ENCODE measurements at regions of chr21 and their contacts with region 1.

Region 1: GRCh38 chr21:34202553-34203372 is 129.4 kb downstream of the MRPS6 start:
- DNase-seq: peak; percentile 23
- H3K4me3 ChIP-seq: peak overlapping the region in 1 of 4 donors; percentile 53
- H3K27ac ChIP-seq: peak overlapping the region; percentile 64 to 79 (median 66)
- H3K4me1 ChIP-seq: peaks cover 6 to 52% (median 15%) of the 10 kb centered on the region in 4 donors
- H3K27me3 ChIP-seq: no peaks in the 10 kb centered on the region
- CTCF ChIP-seq: no peak
- EP300 ChIP-seq: no peak
- POLR2A ChIP-seq: no peak

Region 2: DNA sequence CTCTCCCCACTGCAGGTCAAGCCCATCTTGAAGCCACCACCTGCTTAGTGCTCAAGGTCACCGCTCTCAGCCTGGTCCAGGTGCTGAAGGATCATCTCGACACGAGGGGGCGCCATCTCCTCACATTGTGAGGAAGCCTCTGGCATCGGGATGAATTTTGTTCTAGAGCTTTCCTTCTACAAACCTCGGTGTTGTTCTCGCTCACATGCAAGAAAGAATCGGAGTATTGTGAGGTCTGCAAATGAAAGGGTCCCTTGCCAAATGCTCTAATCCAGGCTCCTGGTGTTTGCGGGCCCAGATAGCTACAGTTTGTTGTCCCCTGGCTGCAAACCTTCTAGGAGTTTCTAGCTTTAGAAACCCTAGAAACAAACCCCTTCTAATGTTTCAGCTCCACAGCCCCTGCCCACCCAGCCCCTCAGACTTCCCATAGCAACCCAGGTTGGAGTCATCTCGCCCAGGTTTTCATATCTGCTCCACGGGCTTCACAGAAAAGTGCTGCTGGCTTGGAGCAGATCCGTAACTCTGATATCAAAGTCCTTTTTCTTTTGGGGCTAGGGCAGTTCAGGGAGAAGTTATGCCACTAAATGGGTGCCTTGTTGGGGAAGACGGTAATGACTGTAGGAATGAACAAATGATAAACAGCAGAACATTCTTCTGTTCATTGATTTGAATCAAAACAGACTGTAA is 278.5 kb before region 1 on chr21:
- in situ Hi-C with region 1: loop called in 2 of 4 experiments (anchors 10 to 25 kb)
- intact Hi-C with region 1: no loop called
- DNase-seq: peak; percentile 94
- H3K4me3 ChIP-seq: peak overlapping the region in 1 of 4 donors; percentile 20
- H3K27ac ChIP-seq: peak overlapping the region; percentile 28 to 54 (median 38)
- H3K4me1 ChIP-seq: peaks cover 4 to 10% (median 8%) of the 10 kb centered on the region in 4 donors
- H3K27me3 ChIP-seq: no peaks in the 10 kb centered on the region
- CTCF ChIP-seq: peak; percentile 89 to 95 (median 91)
- EP300 ChIP-seq: no peak
- POLR2A ChIP-seq: no peak

Region 3: GRCh38 chr21:33940164-33940880 is 262.4 kb before region 1 on chr21:
- in situ Hi-C with region 1: loop called in 1 of 4 experiments (anchors 25 kb)
- intact Hi-C with region 1: loop called (anchors 5 kb)
- DNase-seq: no peak
- H3K4me3 ChIP-seq: no peak overlapping the region
- H3K27ac ChIP-seq: peak overlapping the region; percentile 51 to 74 (median 64)
- H3K4me1 ChIP-seq: peaks cover 0 to 7% (median 2%) of the 10 kb centered on the region in 4 donors
- H3K27me3 ChIP-seq: no peaks in the 10 kb centered on the region
- CTCF ChIP-seq: no peak
- EP300 ChIP-seq: no peak
- POLR2A ChIP-seq: no peak

Region 4: GRCh38 chr21:33947451-33948095 is 255.2 kb before region 1 on chr21:
- in situ Hi-C with region 1: loop called in 1 of 4 experiments (anchors 25 kb)
- intact Hi-C with region 1: loop called (anchors 5 kb)
- DNase-seq: peak; percentile 83
- H3K4me3 ChIP-seq: peak overlapping the region in 2 of 4 donors; percentile 2 to 20
- H3K27ac ChIP-seq: peak overlapping the region; percentile 75 to 90 (median 84)
- H3K4me1 ChIP-seq: peaks cover 16 to 28% (median 23%) of the 10 kb centered on the region in 4 donors
- H3K27me3 ChIP-seq: no peaks in the 10 kb centered on the region
- CTCF ChIP-seq: no peak
- EP300 ChIP-seq: no peak
- POLR2A ChIP-seq: no peak

Region 5: DNA sequence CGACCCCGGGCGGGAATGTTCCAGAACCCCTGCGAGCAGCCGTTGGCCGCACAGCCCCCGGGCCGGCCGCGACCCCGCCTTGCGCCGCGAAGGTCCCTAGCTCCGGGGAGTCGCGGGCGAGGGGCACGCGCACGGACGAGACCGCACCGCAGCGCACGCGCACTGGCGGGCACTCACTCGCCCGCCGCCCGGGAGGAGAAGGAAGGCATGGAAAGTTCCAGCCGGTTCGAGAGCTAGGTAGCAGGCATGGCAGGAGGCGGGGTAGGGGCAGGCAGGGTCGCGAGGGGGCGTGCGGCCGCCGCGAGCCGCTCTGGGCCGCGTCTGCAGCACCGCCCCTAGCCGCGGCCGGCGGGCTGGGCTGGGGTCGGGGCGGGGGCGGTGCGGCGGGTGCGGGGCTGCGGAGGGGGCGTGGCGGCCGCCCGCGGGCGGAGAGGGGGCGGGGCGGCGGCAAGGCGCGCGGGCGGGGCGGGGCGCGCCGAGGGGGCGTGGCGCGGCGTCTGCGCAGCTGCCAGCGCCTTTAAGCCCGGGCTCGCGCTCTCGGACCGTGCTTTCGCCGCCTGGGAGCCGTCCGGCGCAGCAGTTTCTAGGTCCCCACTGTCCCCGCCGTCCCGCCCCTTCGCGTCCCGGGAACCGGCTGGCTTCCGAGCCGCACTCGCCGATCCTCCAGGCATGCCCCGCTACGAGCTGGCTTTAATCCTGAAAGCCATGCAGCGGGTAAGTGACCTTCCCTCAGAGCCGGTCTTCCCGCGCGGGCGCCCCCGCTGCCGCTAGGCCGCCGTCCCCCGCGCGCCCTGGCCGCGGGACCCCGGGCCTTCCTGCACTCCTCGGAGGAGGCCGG is 129.5 kb before region 1 on chr21 and contains the starts of genes MRPS6 and SLC5A3:
- in situ Hi-C with region 1: no loop called
- intact Hi-C with region 1: loop called (anchors 2 kb)
- DNase-seq: peak; percentile 89
- H3K4me3 ChIP-seq: peak within 1 kb of the TSS; percentile 74 to 91 (median 85)
- H3K27ac ChIP-seq: peak within 1 kb of the TSS; percentile 88 to 97 (median 95)
- H3K4me1 ChIP-seq: peaks cover 7 to 45% (median 38%) of the 10 kb centered on the region in 4 donors
- H3K27me3 ChIP-seq: no peaks in the 10 kb centered on the region
- CTCF ChIP-seq: no peak
- EP300 ChIP-seq: no peak
- POLR2A ChIP-seq: peak; percentile 87
- total RNA-seq, gene MRPS6: 27.9 to 59.1 (median 35.6) TPM
- total RNA-seq, gene SLC5A3: 12.0 to 32.6 (median 23.9) TPM

Region 6: GRCh38 chr21:34129039-34129891 is 73.5 kb before region 1 on chr21:
- in situ Hi-C with region 1: no loop called
- intact Hi-C with region 1: loop called (anchors 5 kb)
- DNase-seq: peak; percentile 42
- H3K4me3 ChIP-seq: no peak overlapping the region
- H3K27ac ChIP-seq: peak overlapping the region; percentile 63 to 87 (median 78)
- H3K4me1 ChIP-seq: peaks cover 26 to 66% (median 36%) of the 10 kb centered on the region in 4 donors
- H3K27me3 ChIP-seq: no peaks in the 10 kb centered on the region
- CTCF ChIP-seq: peak in 3 of 5 experiments; percentile 22 to 28 (median 24)
- EP300 ChIP-seq: no peak
- POLR2A ChIP-seq: no peak

Region 7: GRCh38 chr21:34345091-34345871 is 142.5 kb after region 1 on chr21:
- in situ Hi-C with region 1: no loop called
- intact Hi-C with region 1: loop called (anchors 5 kb)
- DNase-seq: no peak
- H3K4me3 ChIP-seq: no peak overlapping the region
- H3K27ac ChIP-seq: peak overlapping the region; percentile 39 to 69 (median 60)
- H3K4me1 ChIP-seq: peaks cover 0 to 12% (median 6%) of the 10 kb centered on the region in 4 donors
- H3K27me3 ChIP-seq: no peaks in the 10 kb centered on the region
- CTCF ChIP-seq: no peak
- EP300 ChIP-seq: no peak
- POLR2A ChIP-seq: no peak